ENCODE measurements at regions of chr16 and their contacts with region 1.

Region 1: GRCh38 chr16:84726079-84726668 is 26.4 kb downstream of the USP10 start:
- DNase-seq: peak; percentile 90 to 91
- H3K4me3 ChIP-seq: peak overlapping the region; percentile 23; the same call in 1 of the 2 replicates
- H3K27ac ChIP-seq: peak overlapping the region; percentile 84
- H3K4me1 ChIP-seq: peaks cover 84% of the 10 kb centered on the region
- H3K27me3 ChIP-seq: no peaks in the 10 kb centered on the region
- CTCF ChIP-seq: peak; percentile 98

Region 2: DNA sequence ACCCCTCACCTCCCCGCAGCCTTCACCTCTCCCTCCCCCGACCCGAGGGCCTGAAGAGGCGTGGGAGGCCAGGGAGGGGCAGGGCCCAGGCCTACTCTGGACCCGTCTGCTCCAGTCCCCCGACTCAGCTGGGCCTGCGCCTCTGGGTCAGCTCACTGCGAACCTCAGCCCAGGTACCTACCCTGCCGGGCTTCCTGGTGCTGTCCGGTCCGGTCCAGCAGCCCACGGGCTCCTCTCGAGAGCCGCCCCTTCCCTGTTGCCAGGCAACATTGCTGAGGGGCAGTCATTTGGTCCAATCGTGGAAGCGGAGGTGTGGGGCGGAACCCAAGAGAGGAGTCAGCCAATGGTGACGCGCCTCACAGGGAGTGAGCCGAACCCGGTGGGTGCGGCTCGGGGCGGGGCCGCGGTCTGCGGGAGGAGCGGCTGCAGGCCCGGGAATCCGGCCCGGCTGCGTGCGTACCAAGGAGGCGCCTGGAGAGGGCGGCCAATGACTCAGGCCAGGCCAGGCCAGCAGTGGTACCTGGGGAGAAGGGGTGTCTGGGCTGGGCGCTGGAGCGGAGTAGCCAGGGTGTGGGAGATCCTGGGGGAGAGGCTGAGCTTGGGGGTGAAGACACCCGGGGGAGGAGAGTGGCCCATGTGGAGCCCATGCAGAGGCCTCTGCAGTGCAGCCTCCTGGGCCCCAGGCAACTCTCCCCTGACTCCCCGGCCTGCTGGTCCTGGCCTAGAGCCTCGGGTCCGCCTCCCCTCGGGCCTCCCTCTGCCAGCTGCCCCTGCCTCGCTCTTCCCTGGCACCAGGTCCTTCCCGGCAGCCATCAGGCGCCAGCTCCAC is 221.5 kb before region 1 on chr16 and contains the start of gene MEAK7:
- CTCF ChIA-PET with region 1: interaction called, 4 read pairs
- POLR2A ChIA-PET with region 1: interaction called, 4 read pairs
- intact Hi-C with region 1: loop called (anchors 2 kb)
- DNase-seq: peak; percentile 95 to 99
- H3K4me3 ChIP-seq: peak within 1 kb of the TSS; percentile 92
- H3K27ac ChIP-seq: peak within 1 kb of the TSS; percentile 99
- H3K4me1 ChIP-seq: peaks cover 59% of the 10 kb centered on the region
- H3K27me3 ChIP-seq: no peaks in the 10 kb centered on the region
- CTCF ChIP-seq: no peak
- total RNA-seq, gene MEAK7: 73.4 and 74.6 TPM in 2 replicates

Region 3: GRCh38 chr16:84647828-84648594 is 78.2 kb before region 1 on chr16 and contains the start of gene KLHL36:
- CTCF ChIA-PET with region 1: no interaction called
- POLR2A ChIA-PET with region 1: interaction called, 4 read pairs
- intact Hi-C with region 1: loop called (anchors 5 kb)
- DNase-seq: peak in 1 of 2 experiments; percentile 57
- H3K4me3 ChIP-seq: peak within 1 kb of the TSS; percentile 98
- H3K27ac ChIP-seq: no peak within 1 kb of the TSS
- H3K4me1 ChIP-seq: peaks cover 18% of the 10 kb centered on the region
- H3K27me3 ChIP-seq: no peaks in the 10 kb centered on the region
- CTCF ChIP-seq: no peak
- total RNA-seq, gene KLHL36: 73.8 and 81.9 TPM in 2 replicates

Region 4: GRCh38 chr16:84663433-84664101 is 62.6 kb before region 1 on chr16:
- CTCF ChIA-PET with region 1: no interaction called
- POLR2A ChIA-PET with region 1: no interaction called
- intact Hi-C with region 1: no loop called
- DNase-seq: no peak
- H3K4me3 ChIP-seq: no peak overlapping the region
- H3K27ac ChIP-seq: no peak overlapping the region
- H3K4me1 ChIP-seq: no peaks in the 10 kb centered on the region
- H3K27me3 ChIP-seq: no peaks in the 10 kb centered on the region
- CTCF ChIP-seq: no peak

Region 5: DNA sequence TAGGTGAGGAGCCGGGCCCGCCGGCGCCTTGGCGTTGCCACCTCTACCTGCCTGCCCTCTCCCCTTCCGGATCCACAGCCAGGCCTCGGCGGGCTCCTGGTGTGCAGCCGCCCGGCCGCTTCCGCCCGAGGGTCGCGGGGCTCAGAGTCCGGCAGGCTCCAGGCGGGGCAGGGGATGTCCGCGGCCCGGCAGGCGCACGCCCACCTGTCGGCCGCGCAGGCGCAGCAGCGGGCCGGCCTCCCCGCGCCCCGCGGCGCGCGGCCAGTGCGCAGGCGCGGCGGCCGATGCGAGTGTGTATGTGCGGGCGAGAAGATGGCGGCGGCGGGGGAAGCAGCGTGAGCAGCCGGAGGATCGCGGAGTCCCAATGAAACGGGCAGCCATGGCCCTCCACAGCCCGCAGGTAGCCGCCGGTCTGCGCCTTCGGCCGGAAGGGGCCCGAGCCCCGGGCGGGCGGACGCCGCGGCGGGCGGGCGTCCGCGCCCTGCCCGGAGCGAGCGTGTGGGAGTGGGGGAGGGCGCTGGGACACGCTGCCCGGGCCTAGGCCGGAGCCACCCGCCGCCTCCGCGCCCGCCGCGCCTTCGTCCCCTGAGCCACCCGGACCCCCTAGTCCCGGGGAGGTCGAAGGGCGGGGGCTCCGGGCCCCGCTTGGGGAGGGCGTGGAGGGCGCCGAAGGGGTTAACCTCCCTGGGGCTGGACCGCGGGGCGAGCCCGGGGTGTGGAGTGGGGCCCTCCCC is 26.3 kb before region 1 on chr16 and contains the start of gene USP10:
- CTCF ChIA-PET with region 1: no interaction called
- POLR2A ChIA-PET with region 1: interaction called, 3 read pairs
- intact Hi-C with region 1: loop called (anchors 2 kb)
- DNase-seq: peak in 1 of 2 experiments; percentile 86
- H3K4me3 ChIP-seq: peak within 1 kb of the TSS; percentile 93
- H3K27ac ChIP-seq: no peak within 1 kb of the TSS
- H3K4me1 ChIP-seq: peaks cover 29% of the 10 kb centered on the region
- H3K27me3 ChIP-seq: no peaks in the 10 kb centered on the region
- CTCF ChIP-seq: no peak
- total RNA-seq, gene USP10: 86.3 and 109 TPM in 2 replicates

Region 6: DNA sequence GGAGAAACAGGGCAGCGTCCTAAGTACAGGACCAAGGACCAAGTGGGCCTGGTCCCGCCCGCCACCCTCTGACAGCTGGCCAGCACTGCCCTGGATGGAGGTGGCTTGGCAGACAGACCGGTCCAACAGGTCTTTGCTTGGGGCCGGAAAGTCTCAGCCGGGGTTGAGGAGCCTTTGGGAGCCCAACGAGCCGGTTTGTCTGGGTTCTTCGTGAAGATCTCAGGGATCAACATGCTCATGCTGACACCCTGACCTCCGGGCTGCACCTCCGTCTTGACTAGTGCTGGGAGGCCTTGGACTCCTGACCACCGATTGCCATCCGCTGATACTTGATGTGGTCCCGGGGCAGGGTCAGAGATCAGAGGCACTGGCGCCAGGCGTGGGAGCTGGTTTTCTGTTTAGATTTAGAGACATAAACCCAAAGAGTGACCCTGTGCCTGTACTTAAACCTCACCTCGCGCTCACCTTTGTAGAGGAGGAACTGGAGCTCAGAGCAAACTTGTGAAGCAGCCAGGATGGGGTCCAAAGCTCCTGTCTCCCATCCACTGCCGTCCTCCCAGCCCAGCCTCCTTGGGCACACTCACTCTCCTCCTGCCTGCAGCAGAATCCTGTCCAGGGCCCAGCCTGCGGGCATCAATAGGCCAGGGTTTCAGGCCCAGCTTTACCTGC is 794.8 kb after region 1 on chr16:
- CTCF ChIA-PET with region 1: no interaction called
- POLR2A ChIA-PET with region 1: interaction called, 16 read pairs
- intact Hi-C with region 1: no loop called
- DNase-seq: peak; percentile 91 to 96
- H3K4me3 ChIP-seq: no peak overlapping the region; the same call in 1 of the 2 replicates
- H3K27ac ChIP-seq: peak overlapping the region; percentile 55
- H3K4me1 ChIP-seq: peaks cover 70% of the 10 kb centered on the region
- H3K27me3 ChIP-seq: no peaks in the 10 kb centered on the region
- CTCF ChIP-seq: no peak

Measured in PC-9 (cell line).